GM12878 (cell line): ENCODE measurements at regions of chr1 and their contacts with region 1.

Region 1: GRCh38 chr1:154479764-154480421 is 22.1 kb upstream of the TDRD10 start:
- DNase-seq: peak; percentile 45
- ATAC-seq: peak; percentile 97
- H3K4me3 ChIP-seq: no peak overlapping the region
- H3K27ac ChIP-seq: no peak overlapping the region
- H3K4me1 ChIP-seq: peaks cover 3% of the 10 kb centered on the region; the same call in 1 of the 2 replicates
- H3K27me3 ChIP-seq: peaks cover 0 to 3% of the 10 kb centered on the region in 2 experiments; a peak in 1 of 4 replicates
- CTCF ChIP-seq: peak; percentile 92 to 95 (median 92); a peak in 5 of 6 replicates
- EP300 ChIP-seq: no peak
- POLR2A ChIP-seq: no peak
- RAD21 ChIP-seq: peak; percentile 100

Region 2: DNA sequence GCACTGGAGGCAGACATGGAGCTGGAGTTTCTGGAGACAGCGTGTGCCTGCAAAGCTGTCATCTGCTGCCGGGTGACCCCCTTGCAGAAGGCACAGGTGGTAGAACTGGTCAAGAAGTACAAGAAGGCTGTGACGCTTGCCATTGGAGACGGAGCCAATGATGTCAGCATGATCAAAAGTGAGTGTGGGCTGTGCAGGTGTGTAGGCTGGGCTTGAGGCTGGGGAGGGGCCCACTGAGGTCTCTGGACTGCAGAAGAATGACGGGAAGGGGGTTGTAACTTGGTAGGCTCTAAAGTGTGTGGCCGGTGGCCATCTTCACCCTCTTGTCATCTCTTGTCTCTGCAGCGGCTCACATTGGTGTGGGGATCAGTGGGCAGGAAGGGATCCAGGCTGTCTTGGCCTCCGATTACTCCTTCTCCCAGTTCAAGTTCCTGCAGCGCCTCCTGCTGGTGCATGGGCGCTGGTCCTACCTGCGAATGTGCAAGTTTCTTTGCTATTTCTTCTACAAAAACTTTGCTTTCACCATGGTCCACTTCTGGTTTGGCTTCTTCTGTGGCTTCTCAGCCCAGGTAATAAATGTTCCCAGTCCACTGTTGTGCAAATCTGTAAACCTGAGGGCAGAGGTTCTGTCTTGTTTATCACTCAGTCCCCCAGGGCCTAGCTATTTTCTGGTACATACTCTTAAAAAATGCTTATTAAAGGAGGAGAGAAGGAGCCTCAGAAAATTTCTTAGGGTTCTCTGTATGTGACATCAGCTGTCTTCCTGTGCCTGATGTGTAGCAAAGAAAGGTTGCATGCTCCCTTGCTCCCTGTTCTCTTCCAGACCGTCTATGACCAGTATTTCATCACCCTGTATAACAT is 134.7 kb before region 1 on chr1:
- CTCF ChIA-PET with region 1: interaction called, 94 read pairs
- POLR2A ChIA-PET with region 1: no interaction called
- RAD21 ChIA-PET with region 1: interaction called, 11 read pairs
- SMC1A ChIA-PET with region 1: interaction called, 33 read pairs
- in situ Hi-C with region 1: no loop called
- intact Hi-C with region 1: loop called (anchors 1 kb)
- DNase-seq: no peak
- ATAC-seq: peak; percentile 77
- H3K4me3 ChIP-seq: no peak overlapping the region
- H3K27ac ChIP-seq: no peak overlapping the region
- H3K4me1 ChIP-seq: no peaks in the 10 kb centered on the region
- H3K27me3 ChIP-seq: no peaks in the 10 kb centered on the region
- CTCF ChIP-seq: peak; percentile 54 to 80 (median 70)
- EP300 ChIP-seq: no peak
- POLR2A ChIP-seq: no peak
- RAD21 ChIP-seq: peak; percentile 49

Region 3: GRCh38 chr1:154463512-154463990 is 16.3 kb before region 1 on chr1:
- CTCF ChIA-PET with region 1: interaction called, 62 read pairs
- POLR2A ChIA-PET with region 1: no interaction called
- RAD21 ChIA-PET with region 1: interaction called, 16 read pairs
- SMC1A ChIA-PET with region 1: interaction called, 24 read pairs
- in situ Hi-C with region 1: no loop called
- intact Hi-C with region 1: no loop called
- DNase-seq: peak; percentile 46
- ATAC-seq: peak; percentile 42
- H3K4me3 ChIP-seq: no peak overlapping the region
- H3K27ac ChIP-seq: no peak overlapping the region
- H3K4me1 ChIP-seq: peaks cover 20% of the 10 kb centered on the region
- H3K27me3 ChIP-seq: no peaks in the 10 kb centered on the region
- CTCF ChIP-seq: no peak
- EP300 ChIP-seq: no peak
- POLR2A ChIP-seq: no peak
- RAD21 ChIP-seq: no peak

Region 4: GRCh38 chr1:154533952-154534844 is 54.3 kb after region 1 on chr1:
- CTCF ChIA-PET with region 1: interaction called, 16 read pairs
- POLR2A ChIA-PET with region 1: no interaction called
- RAD21 ChIA-PET with region 1: interaction called, 5 read pairs
- SMC1A ChIA-PET with region 1: interaction called, 16 read pairs
- in situ Hi-C with region 1: no loop called
- intact Hi-C with region 1: no loop called
- DNase-seq: no peak
- ATAC-seq: 0 out of 3 replicates have a peak, but pooled peaks have one; percentile 31
- H3K4me3 ChIP-seq: no peak overlapping the region
- H3K27ac ChIP-seq: no peak overlapping the region
- H3K4me1 ChIP-seq: no peaks in the 10 kb centered on the region
- H3K27me3 ChIP-seq: peaks cover 0 to 1% of the 10 kb centered on the region in 2 experiments; a peak in 2 of 4 replicates
- CTCF ChIP-seq: peak; percentile 45 to 62 (median 45); a peak in 5 of 6 replicates
- EP300 ChIP-seq: no peak
- POLR2A ChIP-seq: no peak
- RAD21 ChIP-seq: peak; percentile 28

Region 5: DNA sequence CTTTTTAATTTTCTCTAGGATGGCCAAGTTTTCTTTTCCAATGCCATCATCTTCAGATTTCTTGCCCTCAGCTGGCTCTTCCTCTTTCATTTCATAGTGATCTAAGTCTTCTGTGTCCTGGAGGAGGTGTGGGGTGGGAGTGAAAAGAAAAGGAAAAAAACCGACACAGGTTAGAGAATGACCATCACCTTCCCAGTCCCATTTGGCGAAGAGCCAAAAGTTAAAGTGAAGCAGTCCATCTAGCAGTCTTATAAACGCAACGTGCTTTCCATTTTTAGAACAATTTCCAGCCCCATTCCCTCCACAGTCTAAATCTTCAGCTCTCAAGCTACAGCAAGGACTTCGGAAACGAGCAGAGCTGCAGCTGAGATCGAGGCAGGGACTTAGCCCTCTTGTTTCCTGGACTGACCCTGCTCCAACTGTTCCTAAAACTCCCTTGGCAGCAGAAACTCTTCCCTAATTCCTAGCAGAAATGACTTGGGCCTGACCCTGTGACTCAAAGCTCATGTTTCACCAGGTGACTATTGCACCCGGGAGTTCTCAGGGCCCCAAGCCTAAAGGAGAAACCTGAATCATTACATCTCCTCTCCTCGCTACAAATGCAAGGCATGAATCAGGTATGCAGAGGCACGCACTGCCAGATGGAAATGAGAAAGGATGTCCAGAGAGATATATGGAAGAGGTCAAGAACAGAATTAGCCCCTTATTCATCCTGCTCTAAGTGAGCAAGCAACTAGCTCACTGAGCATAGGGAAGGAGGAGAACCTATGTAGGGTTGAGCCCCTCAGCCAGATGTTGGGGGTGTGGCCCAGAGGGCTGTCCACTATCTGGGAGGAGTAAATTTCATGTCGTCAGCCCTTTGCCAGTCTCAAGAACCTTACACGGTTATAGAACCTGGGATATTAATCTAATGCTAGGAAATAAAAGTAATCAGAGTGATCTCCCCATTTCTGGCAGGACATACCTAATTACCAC is 73.5 kb after region 1 on chr1:
- CTCF ChIA-PET with region 1: interaction called, 302 read pairs
- POLR2A ChIA-PET with region 1: no interaction called
- RAD21 ChIA-PET with region 1: interaction called, 189 read pairs
- SMC1A ChIA-PET with region 1: interaction called, 151 read pairs
- in situ Hi-C with region 1: loop called (anchors 5 kb)
- intact Hi-C with region 1: no loop called
- DNase-seq: no peak
- ATAC-seq: no peak
- H3K4me3 ChIP-seq: no peak overlapping the region
- H3K27ac ChIP-seq: no peak overlapping the region
- H3K4me1 ChIP-seq: peaks cover 20% of the 10 kb centered on the region
- H3K27me3 ChIP-seq: no peaks in the 10 kb centered on the region
- CTCF ChIP-seq: no peak
- EP300 ChIP-seq: no peak
- POLR2A ChIP-seq: no peak
- RAD21 ChIP-seq: no peak

Region 6: DNA sequence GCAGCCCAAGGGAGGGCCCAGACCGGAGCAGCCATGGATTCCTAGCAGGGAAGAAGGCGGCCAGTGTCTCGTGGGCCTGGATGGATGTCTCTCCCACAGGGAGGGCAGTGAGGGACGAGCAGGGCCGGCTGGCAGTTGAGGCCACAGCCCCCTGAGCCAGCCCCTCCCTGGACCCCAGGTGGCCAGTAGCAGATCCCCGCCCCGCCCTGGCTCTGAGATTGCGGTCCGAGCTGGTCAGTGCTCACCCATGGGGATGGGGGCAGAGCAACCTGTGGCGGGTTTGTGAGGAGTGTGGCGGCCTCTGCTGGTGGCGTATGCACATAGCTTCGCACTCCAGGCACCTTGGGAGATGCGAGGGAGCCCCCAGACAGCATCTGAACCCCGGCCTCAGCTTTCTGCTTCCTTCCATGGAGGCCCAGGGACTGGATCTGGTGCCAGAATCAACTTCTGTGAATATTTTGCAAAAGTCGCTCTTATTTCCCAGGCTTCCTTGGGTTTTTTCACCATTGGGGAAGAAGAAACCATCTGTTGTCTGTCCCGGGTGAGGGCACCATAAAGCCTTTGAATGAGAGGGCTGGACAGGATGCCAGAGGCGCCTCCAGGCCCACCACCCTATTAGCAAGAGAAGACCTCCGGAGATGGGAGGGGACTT is 398.6 kb after region 1 on chr1:
- CTCF ChIA-PET with region 1: interaction called, 16 read pairs
- POLR2A ChIA-PET with region 1: interaction called, 4 read pairs
- RAD21 ChIA-PET with region 1: interaction called, 13 read pairs
- SMC1A ChIA-PET with region 1: interaction called, 4 read pairs
- in situ Hi-C with region 1: no loop called
- intact Hi-C with region 1: loop called (anchors 5 kb)
- DNase-seq: no peak
- ATAC-seq: peak; percentile 94
- H3K4me3 ChIP-seq: no peak overlapping the region
- H3K27ac ChIP-seq: no peak overlapping the region
- H3K4me1 ChIP-seq: peaks cover 10% of the 10 kb centered on the region
- H3K27me3 ChIP-seq: no peaks in the 10 kb centered on the region
- CTCF ChIP-seq: peak; percentile 92 to 97 (median 94)
- EP300 ChIP-seq: no peak
- POLR2A ChIP-seq: no peak
- RAD21 ChIP-seq: peak; percentile 96